ENCODE measurements at regions of chr1 and their contacts with region 1.

Region 1: DNA sequence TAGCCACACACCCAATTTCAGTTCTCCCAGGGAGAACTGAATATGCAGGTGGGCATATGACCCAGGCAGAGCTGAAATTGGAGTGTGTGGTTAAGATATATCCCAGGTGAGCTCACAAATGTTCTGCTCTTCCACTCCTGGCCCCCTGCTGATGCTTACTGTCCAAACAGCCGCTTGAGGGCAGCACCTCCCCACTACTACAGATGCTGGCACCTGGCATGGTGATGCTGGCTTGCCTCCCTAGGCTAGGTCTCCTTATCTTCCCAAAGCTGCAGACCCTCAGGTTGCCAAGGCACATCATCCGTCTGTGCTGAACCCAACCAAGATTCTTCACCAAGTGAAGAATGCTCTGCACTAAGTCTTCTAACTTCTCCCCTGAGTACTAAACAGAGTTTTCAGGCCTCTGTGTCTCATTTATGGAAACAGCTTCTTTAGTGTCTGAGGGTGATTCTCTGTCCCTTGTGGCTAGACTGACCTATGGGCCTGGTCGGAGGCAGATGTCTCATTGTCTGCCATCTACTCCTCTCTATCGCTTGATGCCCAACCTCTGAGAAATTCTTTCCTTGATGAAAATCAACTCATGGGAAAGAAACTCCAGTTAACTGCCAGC is 27.2 kb downstream of the XCL1 start:
- DNase-seq: peak; percentile 66 to 82 (median 74)
- ATAC-seq: peak; percentile 98
- H3K4me3 ChIP-seq: no peak overlapping the region
- H3K27ac ChIP-seq: no peak overlapping the region
- H3K4me1 ChIP-seq: no peaks in the 10 kb centered on the region
- H3K27me3 ChIP-seq: no peaks in the 10 kb centered on the region
- CTCF ChIP-seq: peak; percentile 72 to 81

Region 2: GRCh38 chr1:168145184-168146159 is 458.1 kb before region 1 on chr1:
- intact Hi-C with region 1: no loop called
- DNase-seq: peak; percentile 74 to 95 (median 89)
- ATAC-seq: peak; percentile 99
- H3K4me3 ChIP-seq: no peak overlapping the region
- H3K27ac ChIP-seq: peak overlapping the region in 1 of 2 donors; percentile 28
- H3K4me1 ChIP-seq: peaks cover 0 to 5% of the 10 kb centered on the region in 2 donors
- H3K27me3 ChIP-seq: no peaks in the 10 kb centered on the region
- CTCF ChIP-seq: peak; percentile 89 to 93

Region 3: DNA sequence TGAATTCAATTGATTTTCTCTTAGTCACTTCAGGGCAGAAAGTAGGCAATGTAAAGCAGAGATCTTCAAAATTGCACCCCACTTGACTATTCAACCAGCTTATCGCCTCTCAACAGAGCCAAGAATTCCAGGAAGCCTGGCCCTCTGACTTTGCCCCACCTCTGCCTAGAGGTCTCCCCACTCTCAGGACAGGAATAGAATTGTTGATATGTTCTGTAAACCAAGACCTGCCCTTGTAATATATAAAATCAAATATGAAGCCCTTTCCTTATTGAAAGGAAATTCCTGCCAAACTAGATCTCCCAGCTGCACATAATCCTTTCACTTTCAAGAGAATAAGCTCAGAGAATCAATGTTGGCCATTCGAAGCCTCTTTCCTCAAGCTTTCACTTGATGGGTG is 241.5 kb after region 1 on chr1:
- intact Hi-C with region 1: no loop called
- DNase-seq: peak in 2 of 4 donors; percentile 38 to 39
- ATAC-seq: peak; percentile 73
- H3K4me3 ChIP-seq: no peak overlapping the region
- H3K27ac ChIP-seq: no peak overlapping the region
- H3K4me1 ChIP-seq: peaks cover 0 to 2% of the 10 kb centered on the region in 2 donors
- H3K27me3 ChIP-seq: no peaks in the 10 kb centered on the region
- CTCF ChIP-seq: no peak

Region 4: GRCh38 chr1:169348383-169349036 is 744.9 kb after region 1 on chr1:
- intact Hi-C with region 1: loop called in 1 of 2 experiments (anchors 5 kb)
- DNase-seq: peak in 2 of 4 donors; percentile 59 to 71
- ATAC-seq: peak; percentile 70
- H3K4me3 ChIP-seq: no peak overlapping the region
- H3K27ac ChIP-seq: no peak overlapping the region
- H3K4me1 ChIP-seq: no peaks in the 10 kb centered on the region
- H3K27me3 ChIP-seq: no peaks in the 10 kb centered on the region
- CTCF ChIP-seq: peak; percentile 72 to 76

Measured in left lung (tissue), 14 donors.